CD8-positive, alpha-beta memory T cell (primary cell): ENCODE measurements at regions of chr9 and their contacts with region 1.

Region 1: DNA sequence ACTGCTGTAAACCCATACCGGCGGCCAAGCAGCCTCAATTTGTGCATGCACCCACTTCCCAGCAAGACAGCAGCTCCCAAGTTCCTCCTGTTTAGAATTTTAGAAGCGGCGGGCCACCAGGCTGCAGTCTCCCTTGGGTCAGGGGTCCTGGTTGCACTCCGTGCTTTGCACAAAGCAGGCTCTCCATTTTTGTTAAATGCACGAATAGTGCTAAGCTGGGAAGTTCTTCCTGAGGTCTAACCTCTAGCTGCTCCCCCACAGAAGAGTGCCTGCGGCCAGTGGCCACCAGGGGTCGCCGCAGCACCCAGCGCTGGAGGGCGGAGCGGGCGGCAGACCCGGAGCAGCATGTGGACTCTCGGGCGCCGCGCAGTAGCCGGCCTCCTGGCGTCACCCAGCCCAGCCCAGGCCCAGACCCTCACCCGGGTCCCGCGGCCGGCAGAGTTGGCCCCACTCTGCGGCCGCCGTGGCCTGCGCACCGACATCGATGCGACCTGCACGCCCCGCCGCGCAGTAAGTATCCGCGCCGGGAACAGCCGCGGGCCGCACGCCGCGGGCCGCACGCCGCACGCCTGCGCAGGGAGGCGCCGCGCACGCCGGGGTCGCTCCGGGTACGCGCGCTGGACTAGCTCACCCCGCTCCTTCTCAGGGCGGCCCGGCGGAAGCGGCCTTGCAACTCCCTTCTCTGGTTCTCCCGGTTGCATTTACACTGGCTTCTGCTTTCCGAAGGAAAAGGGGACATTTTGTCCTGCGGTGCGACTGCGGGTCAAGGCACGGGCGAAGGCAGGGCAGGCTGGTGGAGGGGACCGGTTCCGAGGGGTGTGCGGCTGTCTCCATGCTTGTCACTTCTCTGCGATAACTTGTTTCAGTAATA is at the start of gene FXN:
- DNase-seq: peak; percentile 66 to 81 (median 75)
- H3K4me3 ChIP-seq: peak within 1 kb of the TSS; percentile 80
- H3K4me3 Mint-ChIP-seq: peak within 1 kb of the TSS; percentile 89 to 97 (median 96)
- H3K27ac ChIP-seq: peak within 1 kb of the TSS; percentile 59
- H3K27ac Mint-ChIP-seq: peak within 1 kb of the TSS; percentile 60 to 94 (median 92)
- H3K4me1 ChIP-seq: peaks cover 12% of the 10 kb centered on the region
- H3K4me1 Mint-ChIP-seq: peaks cover 18 to 23% (median 21%) of the 10 kb centered on the region in 3 donors
- H3K27me3 ChIP-seq: no peaks in the 10 kb centered on the region
- H3K27me3 Mint-ChIP-seq: no peaks in the 10 kb centered on the region
- total RNA-seq, gene FXN: 30.0 to 31.1 TPM

Region 2: GRCh38 chr9:68416936-68417564 is 618.6 kb before region 1 on chr9:
- CTCF ChIA-PET with region 1: no interaction called
- POLR2A ChIA-PET with region 1: no interaction called
- DNase-seq: no peak
- H3K4me3 ChIP-seq: no peak overlapping the region
- H3K4me3 Mint-ChIP-seq: no peak overlapping the region
- H3K27ac ChIP-seq: no peak overlapping the region
- H3K27ac Mint-ChIP-seq: no peak overlapping the region
- H3K4me1 ChIP-seq: no peaks in the 10 kb centered on the region
- H3K4me1 Mint-ChIP-seq: no peaks in the 10 kb centered on the region
- H3K27me3 ChIP-seq: no peaks in the 10 kb centered on the region
- H3K27me3 Mint-ChIP-seq: peaks cover 0 to 1% of the 10 kb centered on the region in 2 donors

Region 3: GRCh38 chr9:69023650-69024049 is 12.0 kb before region 1 on chr9:
- CTCF ChIA-PET with region 1: interaction called, 11 read pairs
- POLR2A ChIA-PET with region 1: interaction called, 4 read pairs
- DNase-seq: no peak
- H3K4me3 ChIP-seq: no peak overlapping the region
- H3K4me3 Mint-ChIP-seq: no peak overlapping the region
- H3K27ac ChIP-seq: no peak overlapping the region
- H3K27ac Mint-ChIP-seq: peak overlapping the region in 1 of 8 donors; percentile 7
- H3K4me1 ChIP-seq: peaks cover 39% of the 10 kb centered on the region
- H3K4me1 Mint-ChIP-seq: peaks cover 28 to 42% (median 32%) of the 10 kb centered on the region in 3 donors
- H3K27me3 ChIP-seq: no peaks in the 10 kb centered on the region
- H3K27me3 Mint-ChIP-seq: peaks cover 1 to 8% of the 10 kb centered on the region in 2 donors

Region 4: DNA sequence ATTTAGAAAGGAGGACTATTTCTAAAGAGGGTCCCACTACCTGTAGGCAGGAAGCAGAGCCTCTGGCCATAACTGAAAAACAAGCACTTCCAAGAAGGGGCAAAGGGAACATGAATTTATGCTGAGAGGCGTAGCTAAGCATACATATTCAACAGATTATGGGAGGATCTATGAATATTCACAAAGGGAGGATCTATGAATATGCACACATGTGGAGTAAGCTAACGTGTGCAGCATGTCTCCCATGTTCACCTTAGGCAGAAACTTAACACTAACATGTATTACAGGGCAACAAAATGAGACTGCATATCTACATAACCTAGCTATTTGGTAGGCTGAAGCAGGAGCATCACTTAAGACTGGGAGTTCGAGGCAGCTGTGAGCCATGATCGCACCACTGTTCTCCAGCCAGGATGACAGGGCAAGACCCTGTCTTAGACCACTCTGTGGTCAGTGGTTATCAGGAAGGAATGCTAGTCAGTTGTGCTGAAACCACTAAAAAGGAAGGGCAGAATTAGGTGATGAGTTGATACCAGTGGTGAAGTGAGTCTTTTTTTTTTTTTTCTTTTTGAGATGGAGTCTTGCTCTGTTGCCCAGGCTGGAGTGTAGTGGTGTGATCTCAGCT is 20.6 kb after region 1 on chr9:
- CTCF ChIA-PET with region 1: interaction called, 12 read pairs
- POLR2A ChIA-PET with region 1: no interaction called
- DNase-seq: no peak
- H3K4me3 ChIP-seq: no peak overlapping the region
- H3K4me3 Mint-ChIP-seq: no peak overlapping the region
- H3K27ac ChIP-seq: no peak overlapping the region
- H3K27ac Mint-ChIP-seq: no peak overlapping the region
- H3K4me1 ChIP-seq: no peaks in the 10 kb centered on the region
- H3K4me1 Mint-ChIP-seq: peaks cover 4 to 15% (median 8%) of the 10 kb centered on the region in 3 donors
- H3K27me3 ChIP-seq: no peaks in the 10 kb centered on the region
- H3K27me3 Mint-ChIP-seq: no peaks in the 10 kb centered on the region

Region 5: DNA sequence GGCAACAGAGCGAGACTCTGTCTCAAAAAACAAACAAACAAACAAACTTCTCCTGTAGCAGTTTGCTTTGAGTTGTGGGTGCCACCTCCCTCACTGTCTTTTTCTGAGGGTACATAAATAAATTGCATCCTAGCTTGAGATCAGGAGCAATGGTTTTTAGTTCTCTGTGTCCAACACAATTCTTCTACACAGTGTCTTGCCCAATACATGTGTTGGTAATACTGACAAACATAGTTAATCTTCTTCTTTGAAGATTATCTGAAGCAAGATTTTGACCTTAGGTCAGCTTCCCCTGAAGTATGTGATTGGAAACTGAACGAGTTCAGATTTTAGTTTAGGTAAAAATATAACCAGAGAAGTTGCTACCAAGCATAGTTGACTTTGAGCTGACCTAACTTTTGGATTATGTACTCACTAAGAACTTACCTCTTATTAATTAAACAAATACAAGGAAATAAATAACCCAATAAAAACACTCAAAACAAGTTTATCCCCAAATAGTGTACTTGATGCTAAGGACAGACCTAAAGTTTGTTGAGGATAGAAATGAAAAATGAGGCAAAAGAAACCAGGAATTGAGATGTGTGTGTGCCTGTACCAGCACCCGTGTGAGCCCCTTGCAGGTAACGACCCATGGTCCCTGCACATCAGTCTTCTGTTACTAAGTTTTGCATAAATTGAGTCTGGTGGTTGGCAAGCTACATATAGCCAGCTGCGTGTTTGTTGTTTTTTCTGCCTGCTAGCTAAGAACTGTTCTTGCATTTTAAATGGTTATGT is 154.6 kb after region 1 on chr9:
- CTCF ChIA-PET with region 1: interaction called, 45 read pairs
- POLR2A ChIA-PET with region 1: interaction called, 3 read pairs
- DNase-seq: no peak
- H3K4me3 ChIP-seq: no peak overlapping the region
- H3K4me3 Mint-ChIP-seq: no peak overlapping the region
- H3K27ac ChIP-seq: no peak overlapping the region
- H3K27ac Mint-ChIP-seq: no peak overlapping the region
- H3K4me1 ChIP-seq: no peaks in the 10 kb centered on the region
- H3K4me1 Mint-ChIP-seq: no peaks in the 10 kb centered on the region
- H3K27me3 ChIP-seq: no peaks in the 10 kb centered on the region
- H3K27me3 Mint-ChIP-seq: no peaks in the 10 kb centered on the region